OCI-LY7 (cell line): ENCODE measurements at regions of chr12 and their contacts with region 1.

Region 1: GRCh38 chr12:100266835-100267618 is at the starts of genes DEPDC4 and SCYL2:
- DNase-seq: peak; percentile 91
- H3K4me3 ChIP-seq: peak within 1 kb of the TSS; percentile 93
- H3K27ac ChIP-seq: peak within 1 kb of the TSS; percentile 45
- H3K4me1 ChIP-seq: peaks cover 23% of the 10 kb centered on the region
- CTCF ChIP-seq: no peak
- total RNA-seq, gene DEPDC4: 1.4 and 2.0 TPM in 2 replicates
- total RNA-seq, gene SCYL2: 13.9 and 16.6 TPM in 2 replicates

Region 2: DNA sequence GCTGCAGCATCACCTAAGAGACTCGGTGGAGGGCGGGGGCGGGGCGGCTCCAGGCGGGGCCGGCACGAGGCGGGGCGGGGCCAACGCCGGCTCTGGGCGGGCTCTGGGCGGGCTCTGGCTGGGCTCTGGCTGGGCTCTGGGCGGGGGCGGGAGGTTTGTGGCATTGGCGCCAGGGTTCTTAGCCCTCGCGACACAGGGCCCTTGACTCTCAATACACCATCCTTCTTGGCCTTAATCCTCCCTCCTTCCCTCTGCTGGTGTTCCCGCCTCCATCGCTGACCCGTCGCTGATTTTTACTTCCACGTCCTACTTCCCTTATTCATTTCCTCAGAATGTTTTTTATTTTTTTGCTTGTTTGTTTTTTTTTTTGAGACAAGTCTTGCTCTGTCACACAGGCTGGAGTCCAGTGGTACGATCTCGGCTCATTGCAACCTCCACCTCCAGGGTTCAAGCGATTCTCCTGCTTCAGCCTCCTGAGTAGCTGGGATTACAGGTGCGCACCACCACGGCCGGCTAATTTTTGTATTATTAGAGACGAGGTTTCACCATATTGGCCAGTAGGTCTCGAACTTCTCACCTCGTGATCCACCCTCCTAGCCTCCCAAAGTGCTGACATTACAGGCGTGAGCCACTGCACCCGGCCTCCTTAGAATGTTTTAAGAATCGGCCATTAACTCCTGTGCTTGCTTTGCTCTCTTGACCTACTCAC is 124.0 kb before region 1 on chr12 and contains the start of gene BLTP3B:
- CTCF ChIA-PET with region 1: no interaction called
- POLR2A ChIA-PET with region 1: no interaction called
- intact Hi-C with region 1: loop called (anchors 2 kb)
- DNase-seq: peak; percentile 87
- H3K4me3 ChIP-seq: peak within 1 kb of the TSS; percentile 82
- H3K27ac ChIP-seq: peak within 1 kb of the TSS; percentile 64
- H3K4me1 ChIP-seq: peaks cover 35% of the 10 kb centered on the region
- CTCF ChIP-seq: no peak
- total RNA-seq, gene BLTP3B: 11.6 and 18.9 TPM in 2 replicates

Region 3: DNA sequence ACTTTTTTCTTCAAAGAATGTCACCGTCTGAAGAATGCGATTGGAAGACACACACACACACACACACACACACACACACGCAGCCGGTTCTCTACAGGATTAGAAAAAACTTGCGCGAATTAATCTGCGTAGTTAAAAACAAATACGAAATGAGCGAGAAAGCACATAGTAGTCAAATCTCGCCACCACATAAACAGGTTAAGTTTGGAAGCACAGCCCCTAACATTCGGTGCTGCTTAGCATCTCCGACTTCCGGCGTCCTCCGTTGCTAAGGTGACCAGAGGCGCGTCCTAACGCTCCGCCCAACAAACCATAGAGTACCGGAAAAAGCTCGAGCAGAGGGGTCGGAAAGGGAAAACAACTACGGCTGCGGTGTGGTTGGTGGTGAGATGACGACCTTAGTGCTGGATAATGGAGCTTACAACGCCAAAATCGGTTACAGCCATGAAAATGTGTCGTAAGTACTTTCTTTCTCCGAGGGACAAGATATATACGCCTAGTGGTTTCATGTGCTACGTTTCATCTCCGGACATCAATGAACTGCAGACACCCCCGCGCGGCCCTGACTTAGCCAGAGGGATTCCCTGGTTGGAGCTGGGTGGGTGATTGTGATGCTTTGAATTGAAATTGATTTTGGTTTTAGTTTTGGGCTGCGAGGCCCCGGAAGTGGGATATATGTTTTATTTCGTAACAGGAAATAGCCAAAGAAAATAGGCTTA is 66.4 kb before region 1 on chr12 and contains the start of gene ACTR6:
- CTCF ChIA-PET with region 1: no interaction called
- POLR2A ChIA-PET with region 1: interaction called, 11 read pairs
- intact Hi-C with region 1: loop called (anchors 5 kb)
- DNase-seq: peak; percentile 97
- H3K4me3 ChIP-seq: peak within 1 kb of the TSS; percentile 89
- H3K27ac ChIP-seq: peak within 1 kb of the TSS; percentile 69
- H3K4me1 ChIP-seq: peaks cover 30% of the 10 kb centered on the region
- CTCF ChIP-seq: no peak
- total RNA-seq, gene ACTR6: 14.6 and 22.2 TPM in 2 replicates

Region 4: DNA sequence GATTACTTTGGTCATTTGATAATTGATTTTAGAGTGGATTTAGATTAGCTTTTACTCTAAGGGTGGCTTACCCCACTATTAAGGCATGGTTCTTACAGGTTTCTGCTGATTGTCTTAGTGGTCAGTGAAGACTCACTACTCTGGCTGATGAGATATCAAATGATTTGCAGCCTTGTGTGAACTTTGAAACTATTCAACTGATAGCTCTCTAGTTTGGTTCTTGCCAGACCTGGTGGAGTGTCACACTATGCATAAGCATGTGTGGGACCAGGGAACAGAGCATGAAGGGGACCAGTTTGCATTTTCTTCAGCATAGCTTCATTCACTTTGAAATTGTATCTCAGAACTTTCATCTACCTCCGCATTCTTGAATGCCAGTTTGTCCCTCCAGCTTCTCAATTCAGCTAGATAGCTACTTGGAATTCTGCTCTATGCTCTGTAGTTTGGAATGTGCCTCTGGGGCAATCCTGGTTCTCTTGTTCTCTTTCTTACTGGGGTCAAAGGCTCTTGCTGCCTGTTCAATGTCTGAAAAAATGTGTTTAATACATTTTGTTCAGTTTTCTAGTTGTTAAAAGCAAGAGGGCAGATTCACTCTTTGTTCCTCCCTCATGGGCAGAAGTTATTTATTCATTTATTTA is 12.7 kb after region 1 on chr12:
- CTCF ChIA-PET with region 1: no interaction called
- POLR2A ChIA-PET with region 1: interaction called, 12 read pairs
- intact Hi-C with region 1: no loop called
- DNase-seq: no peak
- H3K4me3 ChIP-seq: no peak overlapping the region
- H3K27ac ChIP-seq: no peak overlapping the region
- H3K4me1 ChIP-seq: no peaks in the 10 kb centered on the region
- CTCF ChIP-seq: no peak